ENCODE measurements at regions of chr3 and their contacts with region 1.

Region 1: GRCh38 chr3:123328851-123329635 is 119.8 kb downstream of the ADCY5 start:
- DNase-seq: peak; percentile 85
- CTCF ChIP-seq: peak; percentile 95

Region 2: GRCh38 chr3:123314359-123315270 is 14.4 kb before region 1 on chr3:
- CTCF ChIA-PET with region 1: interaction called, 10 read pairs
- POLR2A ChIA-PET with region 1: no interaction called
- DNase-seq: no peak
- CTCF ChIP-seq: no peak

Region 3: GRCh38 chr3:123489400-123490004 is 160.5 kb after region 1 on chr3:
- CTCF ChIA-PET with region 1: interaction called, 37 read pairs
- POLR2A ChIA-PET with region 1: interaction called, 3 read pairs
- DNase-seq: peak; percentile 62
- CTCF ChIP-seq: peak; percentile 90

Region 4: DNA sequence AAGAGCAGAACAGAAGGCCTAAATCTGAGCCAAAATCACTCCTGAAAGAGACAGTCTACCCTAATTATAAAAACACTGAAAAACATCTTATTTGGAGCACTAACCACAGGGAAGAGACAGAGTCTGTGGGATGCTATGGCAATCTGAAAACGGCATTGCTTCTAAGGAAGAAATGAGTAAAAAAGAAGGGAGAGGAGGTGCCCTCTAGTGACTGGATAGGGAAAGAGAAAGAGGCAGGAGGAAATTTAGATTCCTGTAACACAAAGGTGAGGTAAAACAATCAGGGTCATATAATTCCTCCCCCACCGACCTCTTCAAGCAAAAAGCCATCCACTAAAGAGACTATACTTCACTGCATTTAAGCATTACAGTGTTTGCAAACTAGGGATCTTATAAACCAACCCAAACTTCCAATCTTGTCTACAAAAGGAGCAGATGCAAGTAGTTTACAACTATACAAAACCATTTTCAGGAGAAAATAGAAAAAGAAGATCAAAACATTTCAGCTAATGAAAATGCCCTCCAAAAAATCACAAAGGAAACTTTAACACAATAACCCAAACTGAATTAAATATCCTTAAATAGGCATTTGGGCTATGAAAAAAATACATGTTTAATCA is 223.2 kb after region 1 on chr3:
- CTCF ChIA-PET with region 1: interaction called, 74 read pairs
- POLR2A ChIA-PET with region 1: no interaction called
- DNase-seq: peak; percentile 31
- CTCF ChIP-seq: peak; percentile 62